ENCODE measurements at regions of chr9 and their contacts with region 1.

Region 1: GRCh38 chr9:8627976-8628679 is 828.5 kb upstream of the DMAC1 start:
- DNase-seq: no peak
- ATAC-seq: peak in 1 of 4 donors; percentile 38
- H3K4me3 ChIP-seq: no peak overlapping the region
- H3K27ac ChIP-seq: no peak overlapping the region
- H3K4me1 ChIP-seq: peaks cover 0 to 6% (median 0%) of the 10 kb centered on the region in 12 donors
- H3K27me3 ChIP-seq: no peaks in the 10 kb centered on the region
- CTCF ChIP-seq: no peak
- POLR2A ChIP-seq: no peak

Region 2: DNA sequence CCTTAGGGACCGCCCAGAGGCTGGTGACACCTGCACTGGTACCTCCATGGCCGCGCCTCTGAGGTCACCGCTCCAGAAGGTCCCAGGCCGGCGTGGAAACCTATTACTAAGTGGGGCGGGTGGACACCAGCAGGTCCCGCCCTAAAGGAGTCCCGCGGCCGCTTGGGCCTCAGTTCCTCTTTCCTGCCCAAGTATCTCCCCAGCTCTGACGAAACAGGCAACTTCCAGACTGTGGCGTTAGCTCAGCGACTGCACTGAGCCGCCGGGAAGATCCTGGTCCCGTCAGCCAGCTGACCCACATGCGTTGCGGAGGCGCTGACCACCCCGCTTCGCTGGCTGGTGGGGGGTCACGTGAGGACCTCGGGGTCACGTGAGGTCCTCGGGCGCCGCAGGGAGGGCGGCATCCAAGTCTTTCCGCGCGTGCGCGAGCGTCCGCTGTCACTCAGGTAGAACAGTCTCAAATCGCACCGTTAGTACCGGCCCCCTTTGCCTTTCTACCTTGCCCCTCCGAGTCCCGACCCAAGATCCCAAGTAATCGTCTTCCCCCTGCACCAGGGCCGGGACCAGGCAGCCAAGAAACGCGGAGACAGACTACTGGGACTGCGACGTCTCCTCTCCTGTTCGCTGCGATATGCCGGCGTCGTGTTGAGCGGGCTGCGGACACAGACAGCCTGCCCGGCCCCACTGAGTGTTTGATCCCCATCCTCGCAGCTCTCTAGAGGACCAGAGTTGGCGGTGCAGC is 1924.1 kb before region 1 on chr9:
- intact Hi-C with region 1: no loop called
- DNase-seq: peak; percentile 78 to 95 (median 88)
- ATAC-seq: peak; percentile 85 to 98 (median 97)
- H3K4me3 ChIP-seq: peak overlapping the region; percentile 55 to 83 (median 63)
- H3K27ac ChIP-seq: peak overlapping the region; percentile 19 to 90 (median 70)
- H3K4me1 ChIP-seq: peaks cover 0 to 13% (median 5%) of the 10 kb centered on the region in 12 donors
- H3K27me3 ChIP-seq: no peaks in the 10 kb centered on the region
- CTCF ChIP-seq: no peak
- POLR2A ChIP-seq: peak in 1 of 2 donors; percentile 53

Region 3: DNA sequence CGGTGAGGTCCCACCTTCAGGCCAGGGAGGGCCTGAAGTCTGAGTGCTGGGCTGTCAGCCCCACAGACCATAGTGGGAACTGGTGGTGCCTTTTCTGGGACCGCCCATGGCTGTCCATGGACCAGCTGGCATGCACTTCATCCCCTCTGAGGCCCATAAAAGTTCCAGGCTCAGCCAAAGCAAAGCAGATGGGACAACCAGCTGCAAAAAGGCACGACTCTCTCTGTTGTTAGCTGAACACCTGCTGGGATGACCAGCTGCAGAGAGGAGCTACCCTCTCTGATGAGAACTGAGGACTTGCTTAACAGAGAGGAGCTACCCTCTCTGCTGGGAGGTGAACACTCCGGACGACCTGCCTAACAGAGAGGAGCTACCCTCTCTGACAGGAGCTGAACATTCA is 15.8 kb after region 1 on chr9:
- intact Hi-C with region 1: loop called in 1 of 10 experiments (anchors 2 kb)
- DNase-seq: no peak
- ATAC-seq: no peak
- H3K4me3 ChIP-seq: no peak overlapping the region
- H3K27ac ChIP-seq: no peak overlapping the region
- H3K4me1 ChIP-seq: peaks cover 0 to 9% (median 0%) of the 10 kb centered on the region in 12 donors
- H3K27me3 ChIP-seq: no peaks in the 10 kb centered on the region
- CTCF ChIP-seq: no peak
- POLR2A ChIP-seq: no peak

Region 4: DNA sequence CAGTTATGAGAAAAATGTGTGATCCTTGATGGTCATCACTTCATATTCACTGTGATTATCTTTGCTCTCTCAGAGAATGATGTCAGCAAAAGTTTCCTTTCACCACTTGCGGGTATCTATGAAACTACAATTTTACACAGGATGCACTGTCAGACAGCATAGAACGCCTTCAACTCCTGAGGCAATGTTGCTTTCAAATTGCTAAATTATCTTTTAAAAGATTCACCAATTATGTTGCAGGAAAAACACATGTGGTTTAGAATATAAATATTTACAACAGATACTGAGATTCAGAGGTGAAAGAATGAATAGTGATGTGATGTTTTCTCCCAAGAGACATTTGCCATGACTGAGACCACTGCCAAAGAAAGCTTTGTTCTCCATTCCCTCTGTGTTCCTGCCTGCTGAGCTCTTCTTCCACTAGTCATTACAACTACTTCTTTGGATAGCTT is 51.3 kb after region 1 on chr9:
- intact Hi-C with region 1: no loop called
- DNase-seq: no peak
- ATAC-seq: no peak
- H3K4me3 ChIP-seq: no peak overlapping the region
- H3K27ac ChIP-seq: no peak overlapping the region
- H3K4me1 ChIP-seq: peaks cover 0 to 26% (median 8%) of the 10 kb centered on the region in 12 donors
- H3K27me3 ChIP-seq: no peaks in the 10 kb centered on the region
- CTCF ChIP-seq: no peak
- POLR2A ChIP-seq: no peak

Region 5: GRCh38 chr9:8880060-8880459 is 251.9 kb after region 1 on chr9:
- intact Hi-C with region 1: no loop called
- DNase-seq: no peak
- ATAC-seq: no peak
- H3K4me3 ChIP-seq: no peak overlapping the region
- H3K27ac ChIP-seq: no peak overlapping the region
- H3K4me1 ChIP-seq: no peaks in the 10 kb centered on the region
- H3K27me3 ChIP-seq: no peaks in the 10 kb centered on the region
- CTCF ChIP-seq: no peak
- POLR2A ChIP-seq: no peak

Measured in heart left ventricle (tissue), 16 donors.